Gastrocnemius medialis (tissue), 4 donors: ENCODE measurements at regions of chr2 and their contacts with region 1.

Region 1: DNA sequence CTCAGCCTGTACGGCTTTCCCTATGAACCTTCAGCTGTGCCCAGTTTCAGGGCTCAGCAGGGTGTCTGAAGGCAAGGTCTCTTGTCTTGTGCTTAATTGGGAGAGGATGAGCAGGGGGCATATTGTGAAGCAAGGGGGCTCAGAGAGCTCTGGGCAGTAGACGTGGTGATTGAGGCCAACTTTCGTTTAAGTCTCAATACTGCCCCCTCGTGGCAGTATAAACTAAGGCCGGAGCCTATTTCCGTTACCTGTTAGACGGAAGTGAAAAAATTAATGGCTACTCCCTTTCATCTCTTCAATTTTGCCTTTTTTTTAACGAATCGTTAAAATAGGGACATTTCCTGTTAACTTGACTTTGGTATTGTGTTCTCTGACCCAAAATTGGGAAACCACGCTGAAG is 193.4 kb downstream of the TDRD15 start:
- DNase-seq: no peak
- ATAC-seq: no peak
- H3K4me3 ChIP-seq: no peak overlapping the region
- H3K27ac ChIP-seq: no peak overlapping the region
- H3K4me1 ChIP-seq: no peaks in the 10 kb centered on the region
- H3K27me3 ChIP-seq: no peaks in the 10 kb centered on the region
- CTCF ChIP-seq: peak in 4 of 5 experiments; percentile 18 to 61 (median 48)
- POLR2A ChIP-seq: no peak

Region 2: GRCh38 chr2:21025690-21026478 is 291.2 kb before region 1 on chr2:
- in situ Hi-C with region 1: no loop called
- intact Hi-C with region 1: no loop called
- DNase-seq: no peak
- ATAC-seq: no peak
- H3K4me3 ChIP-seq: no peak overlapping the region
- H3K27ac ChIP-seq: no peak overlapping the region
- H3K4me1 ChIP-seq: no peaks in the 10 kb centered on the region
- H3K27me3 ChIP-seq: no peaks in the 10 kb centered on the region
- CTCF ChIP-seq: no peak
- POLR2A ChIP-seq: no peak

Region 3: DNA sequence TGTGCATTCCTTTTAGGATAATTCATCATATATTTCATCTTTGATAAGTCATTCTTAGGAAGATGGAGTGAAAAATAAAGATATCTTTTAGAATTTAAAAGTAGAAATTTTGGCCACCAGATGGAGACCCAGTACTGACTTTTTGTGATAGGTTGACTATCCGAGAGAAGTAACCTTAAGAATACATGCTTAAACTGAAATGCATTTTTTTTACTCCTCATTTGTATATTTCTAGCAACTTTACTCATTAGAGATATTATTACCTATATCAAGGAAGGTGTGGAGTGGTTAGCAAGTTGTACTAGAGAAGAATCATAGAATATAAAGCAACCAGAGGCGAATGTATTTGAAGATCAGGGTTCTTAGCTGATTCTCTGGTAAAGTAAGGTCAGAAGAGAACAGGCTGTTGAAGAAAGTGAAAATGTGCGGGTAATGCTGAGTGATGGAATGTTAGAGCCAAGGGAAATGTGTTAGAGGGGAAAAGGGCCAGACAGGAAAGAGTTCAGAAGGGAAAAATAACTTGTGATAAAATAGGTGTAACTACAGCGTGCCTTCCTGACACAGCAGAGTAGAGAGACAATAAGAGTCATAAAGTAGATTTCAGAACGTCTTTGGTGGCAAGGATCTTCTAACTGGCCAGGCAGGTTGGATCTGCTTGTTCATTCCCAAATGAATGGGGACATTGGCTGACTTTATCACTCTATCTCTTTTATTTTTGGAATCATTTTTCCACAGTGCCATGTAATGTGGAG is 141.1 kb before region 1 on chr2:
- in situ Hi-C with region 1: loop called in 2 of 4 experiments (anchors 10 kb)
- intact Hi-C with region 1: loop called (anchors 5 kb)
- DNase-seq: no peak
- ATAC-seq: no peak
- H3K4me3 ChIP-seq: no peak overlapping the region
- H3K27ac ChIP-seq: no peak overlapping the region
- H3K4me1 ChIP-seq: no peaks in the 10 kb centered on the region
- H3K27me3 ChIP-seq: no peaks in the 10 kb centered on the region
- CTCF ChIP-seq: peak in 2 of 5 experiments; percentile 9 to 11
- POLR2A ChIP-seq: no peak

Region 4: GRCh38 chr2:21381421-21381820 is 64.3 kb after region 1 on chr2:
- in situ Hi-C with region 1: no loop called
- intact Hi-C with region 1: no loop called
- DNase-seq: no peak
- ATAC-seq: no peak
- H3K4me3 ChIP-seq: no peak overlapping the region
- H3K27ac ChIP-seq: no peak overlapping the region
- H3K4me1 ChIP-seq: no peaks in the 10 kb centered on the region
- H3K27me3 ChIP-seq: no peaks in the 10 kb centered on the region
- CTCF ChIP-seq: no peak
- POLR2A ChIP-seq: no peak

Region 5: DNA sequence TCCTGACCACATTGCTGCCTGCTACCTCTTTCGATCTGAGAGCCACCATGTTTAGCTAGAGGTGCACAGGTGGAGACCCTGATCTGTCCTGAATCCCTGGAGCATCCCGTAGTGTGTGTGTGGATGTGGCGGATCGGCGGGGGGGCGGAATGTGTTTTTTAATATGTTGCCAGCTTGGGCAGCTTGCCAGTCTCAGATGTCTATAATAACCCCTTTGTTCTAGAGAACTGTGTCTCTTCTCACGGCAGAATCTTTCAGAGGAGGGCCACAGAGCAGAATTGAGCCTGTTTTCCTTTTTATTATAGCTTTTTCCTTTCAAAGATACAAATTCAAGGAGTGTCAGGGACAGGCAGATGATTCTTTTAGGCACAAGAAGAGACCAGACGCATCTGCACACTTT is 1133.7 kb after region 1 on chr2:
- in situ Hi-C with region 1: no loop called
- intact Hi-C with region 1: no loop called
- DNase-seq: no peak
- ATAC-seq: no peak
- H3K4me3 ChIP-seq: no peak overlapping the region
- H3K27ac ChIP-seq: no peak overlapping the region
- H3K4me1 ChIP-seq: no peaks in the 10 kb centered on the region
- H3K27me3 ChIP-seq: no peaks in the 10 kb centered on the region
- CTCF ChIP-seq: no peak
- POLR2A ChIP-seq: no peak